T-cell (primary cell): ENCODE measurements at regions of chr11 and their contacts with region 1.

Region 1: GRCh38 chr11:47552566-47553416 is at the start of gene CELF1:
- DNase-seq: peak; percentile 82 to 96 (median 91)
- ATAC-seq: peak; percentile 95 to 98 (median 96)
- H3K4me3 ChIP-seq: peak within 1 kb of the TSS; percentile 86 to 94
- H3K4me3 Mint-ChIP-seq: peak within 1 kb of the TSS; percentile 95 to 98 (median 96)
- H3K27ac ChIP-seq: peak within 1 kb of the TSS; percentile 77
- H3K27ac Mint-ChIP-seq: peak within 1 kb of the TSS; percentile 92 to 94
- H3K4me1 ChIP-seq: peaks cover 17 to 27% of the 10 kb centered on the region in 2 experiments
- H3K4me1 Mint-ChIP-seq: peaks cover 46 to 52% (median 47%) of the 10 kb centered on the region in 3 donors
- H3K27me3 ChIP-seq: no peaks in the 10 kb centered on the region
- H3K27me3 Mint-ChIP-seq: no peaks in the 10 kb centered on the region
- total RNA-seq, gene CELF1: 109 to 124 (median 123) TPM

Region 2: GRCh38 chr11:47407746-47408590 is 144.8 kb before region 1 on chr11 and contains the start of gene SLC39A13:
- CTCF ChIA-PET with region 1: no interaction called
- POLR2A ChIA-PET with region 1: interaction called in 1 of 2 experiments, 14 read pairs
- DNase-seq: peak; percentile 71 to 93 (median 83)
- ATAC-seq: peak; percentile 87 to 92 (median 89)
- H3K4me3 ChIP-seq: peak within 1 kb of the TSS; percentile 66 to 69
- H3K4me3 Mint-ChIP-seq: peak within 1 kb of the TSS; percentile 88 to 96 (median 90)
- H3K27ac ChIP-seq: peak within 1 kb of the TSS; percentile 75
- H3K27ac Mint-ChIP-seq: peak within 1 kb of the TSS; percentile 94 to 95
- H3K4me1 ChIP-seq: peaks cover 7 to 35% of the 10 kb centered on the region in 2 experiments
- H3K4me1 Mint-ChIP-seq: peaks cover 24% of the 10 kb centered on the region in 3 donors
- H3K27me3 ChIP-seq: no peaks in the 10 kb centered on the region
- H3K27me3 Mint-ChIP-seq: no peaks in the 10 kb centered on the region
- total RNA-seq, gene SLC39A13: 45.6 to 67.0 (median 65.2) TPM

Region 3: DNA sequence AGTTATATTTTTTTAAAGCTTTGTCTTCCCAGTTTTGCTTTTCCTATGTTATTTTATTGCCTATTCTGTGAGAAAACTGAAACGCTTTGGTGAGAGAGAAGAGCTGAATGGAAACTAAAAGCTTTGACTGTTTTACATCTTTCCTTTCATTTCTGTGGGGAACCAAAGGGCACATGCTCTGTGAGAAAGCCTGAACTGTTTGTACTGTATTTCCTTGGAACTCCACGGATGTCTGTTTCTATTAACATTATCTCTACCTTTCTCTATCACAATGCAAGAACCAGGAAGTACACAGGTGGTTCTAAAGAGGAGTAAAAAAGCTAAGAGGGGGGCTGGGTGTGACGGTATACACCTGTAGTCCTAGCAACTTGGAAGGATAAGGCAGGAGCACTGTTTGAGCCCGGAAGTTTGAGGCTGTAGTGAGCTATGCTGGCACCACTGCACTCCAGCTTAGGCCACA is 43.7 kb before region 1 on chr11:
- CTCF ChIA-PET with region 1: interaction called in 1 of 2 experiments, 6 read pairs
- POLR2A ChIA-PET with region 1: interaction called in 1 of 2 experiments, 13 read pairs
- DNase-seq: peak in 3 of 35 experiments; percentile 4 to 13 (median 13)
- ATAC-seq: peak; percentile 31 to 69 (median 48)
- H3K4me3 ChIP-seq: no peak overlapping the region
- H3K4me3 Mint-ChIP-seq: peak overlapping the region in 2 of 3 donors; percentile 22 to 45
- H3K27ac ChIP-seq: no peak overlapping the region
- H3K27ac Mint-ChIP-seq: peak overlapping the region; percentile 56 to 73
- H3K4me1 ChIP-seq: peaks cover 35 to 42% of the 10 kb centered on the region in 2 experiments
- H3K4me1 Mint-ChIP-seq: peaks cover 76 to 84% (median 83%) of the 10 kb centered on the region in 3 donors
- H3K27me3 ChIP-seq: no peaks in the 10 kb centered on the region
- H3K27me3 Mint-ChIP-seq: no peaks in the 10 kb centered on the region

Region 4: DNA sequence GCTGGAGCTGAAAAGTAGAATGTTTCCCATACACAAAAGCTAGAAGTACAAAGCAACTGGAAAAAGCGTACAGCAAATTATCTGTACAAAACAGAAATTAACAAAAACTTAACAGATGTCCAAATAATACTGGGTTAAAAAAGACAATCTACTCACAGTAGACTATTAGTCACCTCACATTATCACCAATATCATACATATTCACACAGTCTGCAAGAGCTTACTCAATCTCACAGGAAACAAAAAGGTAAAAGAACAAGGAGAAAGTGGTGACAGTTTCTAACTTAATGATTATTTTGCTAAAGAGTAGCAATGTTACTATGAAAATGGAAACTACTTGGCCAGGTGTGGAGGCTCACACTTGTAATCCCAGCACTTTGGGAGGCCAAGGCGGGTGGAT is 11.7 kb before region 1 on chr11:
- CTCF ChIA-PET with region 1: interaction called, 3 to 5 read pairs
- POLR2A ChIA-PET with region 1: interaction called in 1 of 2 experiments, 18 read pairs
- DNase-seq: no peak
- ATAC-seq: no peak
- H3K4me3 ChIP-seq: no peak overlapping the region
- H3K4me3 Mint-ChIP-seq: peak overlapping the region; percentile 50 to 66 (median 51)
- H3K27ac ChIP-seq: no peak overlapping the region
- H3K27ac Mint-ChIP-seq: peak overlapping the region; percentile 58 to 73
- H3K4me1 ChIP-seq: peaks cover 6 to 55% of the 10 kb centered on the region in 2 experiments
- H3K4me1 Mint-ChIP-seq: peaks cover 59 to 78% (median 74%) of the 10 kb centered on the region in 3 donors
- H3K27me3 ChIP-seq: no peaks in the 10 kb centered on the region
- H3K27me3 Mint-ChIP-seq: no peaks in the 10 kb centered on the region